Left cardiac atrium (tissue), 4 donors: ENCODE measurements at regions of chr7 and their contacts with region 1.

Region 1: DNA sequence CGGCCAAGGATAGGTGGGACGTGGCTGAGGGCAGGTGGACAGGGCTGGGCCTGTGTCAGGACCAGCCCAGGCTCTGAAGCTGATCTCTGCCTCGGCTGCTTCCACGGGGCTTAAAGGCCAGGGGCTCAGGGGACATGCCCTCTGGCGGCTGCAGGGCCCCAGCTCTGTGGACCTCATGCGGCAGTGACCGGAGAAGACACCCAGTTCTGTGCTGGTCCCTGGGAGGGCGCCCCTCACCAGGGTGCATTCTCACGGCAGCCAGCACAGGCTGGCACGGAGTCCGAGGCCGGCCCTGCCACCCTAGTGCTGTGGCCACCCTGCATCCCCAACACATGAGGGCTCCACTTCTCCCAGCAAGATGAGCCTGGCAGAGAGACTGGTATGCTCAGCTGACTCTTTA is 30.3 kb downstream of the YKT6 start:
- DNase-seq: no peak
- ATAC-seq: no peak

Region 2: DNA sequence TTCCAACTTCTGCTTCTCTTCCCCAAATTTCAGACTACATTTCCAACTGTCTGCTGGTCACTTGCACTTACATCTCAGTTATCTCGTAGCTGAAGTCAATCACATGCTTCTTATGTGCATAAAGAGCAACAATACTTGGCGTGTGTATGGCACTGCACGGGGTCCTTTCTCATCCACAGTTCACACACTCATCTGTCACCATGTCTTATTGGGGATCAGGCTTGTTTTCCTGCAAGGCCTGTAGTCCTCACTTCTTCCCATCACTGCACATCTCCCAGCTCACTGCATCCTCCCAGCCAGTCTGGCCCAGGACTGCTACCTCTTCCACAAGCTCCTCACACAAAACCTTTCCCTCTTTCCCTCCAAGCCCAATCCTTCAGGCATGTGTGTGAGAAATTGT is 224.1 kb after region 1 on chr7:
- intact Hi-C with region 1: loop called in 1 of 2 experiments (anchors 5 kb)
- DNase-seq: no peak
- ATAC-seq: no peak